Activated T-helper 1 cell treated with anti-CD3 and anti-CD28 coated beads, Interleukin-12 subunit alpha, Interleukin-12 subunit beta, Interleukin-2, Interleukin-4 antibody, amounts not matched to agents 30 ng/mL and 10 ng/mL and 1 ng/mL, durations not matched to agents 14 hours and 24 hours and 36 hours (primary cell): ENCODE measurements at regions of chr11 and their contacts with region 1.

Region 1: DNA sequence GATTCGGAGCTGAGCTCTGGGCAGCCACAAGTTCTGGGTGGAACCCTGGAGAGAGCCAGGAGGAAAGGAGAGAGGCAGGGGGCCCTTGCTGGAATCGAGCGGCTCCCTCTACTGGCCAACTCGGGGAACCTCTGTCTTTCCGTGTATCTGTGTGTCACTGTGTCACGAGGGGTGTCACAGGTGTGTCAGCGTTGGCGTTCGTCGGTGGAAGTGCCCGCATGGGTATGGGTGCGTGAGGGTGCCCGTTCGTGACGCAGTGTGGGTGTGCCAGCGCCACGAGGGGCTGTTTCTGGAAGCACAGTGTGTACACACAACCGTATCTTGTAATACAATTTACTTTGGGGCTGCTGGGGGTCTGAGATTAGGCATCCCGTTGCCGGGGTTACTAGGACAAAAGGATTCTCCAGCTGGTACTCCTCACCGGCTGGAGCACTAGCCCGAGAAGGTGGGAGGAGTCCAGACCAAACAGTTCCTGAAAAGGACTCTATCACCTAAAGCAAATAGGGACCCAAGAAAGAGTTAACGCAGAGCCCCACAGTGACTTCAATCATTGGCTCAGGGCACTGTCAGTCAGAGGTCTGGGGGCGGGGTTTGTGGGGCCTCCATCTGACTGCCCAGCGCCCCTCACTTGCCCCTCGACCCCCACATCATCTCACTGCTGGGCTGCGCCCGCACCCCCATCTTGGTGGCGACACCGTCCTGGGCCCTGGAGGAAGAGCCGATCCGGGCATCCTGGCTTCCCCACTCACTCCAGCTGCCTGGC is 2.6 kb upstream of the BCL9L start:
- DNase-seq: peak; percentile 85
- H3K4me3 Mint-ChIP-seq: peak overlapping the region; percentile 93
- H3K27ac Mint-ChIP-seq: peak overlapping the region; percentile 95
- H3K4me1 Mint-ChIP-seq: peaks cover 53% of the 10 kb centered on the region
- H3K27me3 Mint-ChIP-seq: peaks cover 3% of the 10 kb centered on the region

Region 2: GRCh38 chr11:118002541-118003423 is 925.5 kb before region 1 on chr11:
- intact Hi-C with region 1: loop called (anchors 5 kb)
- DNase-seq: peak; percentile 50
- H3K4me3 Mint-ChIP-seq: peak overlapping the region; percentile 61
- H3K27ac Mint-ChIP-seq: peak overlapping the region; percentile 98
- H3K4me1 Mint-ChIP-seq: peaks cover 92% of the 10 kb centered on the region
- H3K27me3 Mint-ChIP-seq: no peaks in the 10 kb centered on the region

Region 3: DNA sequence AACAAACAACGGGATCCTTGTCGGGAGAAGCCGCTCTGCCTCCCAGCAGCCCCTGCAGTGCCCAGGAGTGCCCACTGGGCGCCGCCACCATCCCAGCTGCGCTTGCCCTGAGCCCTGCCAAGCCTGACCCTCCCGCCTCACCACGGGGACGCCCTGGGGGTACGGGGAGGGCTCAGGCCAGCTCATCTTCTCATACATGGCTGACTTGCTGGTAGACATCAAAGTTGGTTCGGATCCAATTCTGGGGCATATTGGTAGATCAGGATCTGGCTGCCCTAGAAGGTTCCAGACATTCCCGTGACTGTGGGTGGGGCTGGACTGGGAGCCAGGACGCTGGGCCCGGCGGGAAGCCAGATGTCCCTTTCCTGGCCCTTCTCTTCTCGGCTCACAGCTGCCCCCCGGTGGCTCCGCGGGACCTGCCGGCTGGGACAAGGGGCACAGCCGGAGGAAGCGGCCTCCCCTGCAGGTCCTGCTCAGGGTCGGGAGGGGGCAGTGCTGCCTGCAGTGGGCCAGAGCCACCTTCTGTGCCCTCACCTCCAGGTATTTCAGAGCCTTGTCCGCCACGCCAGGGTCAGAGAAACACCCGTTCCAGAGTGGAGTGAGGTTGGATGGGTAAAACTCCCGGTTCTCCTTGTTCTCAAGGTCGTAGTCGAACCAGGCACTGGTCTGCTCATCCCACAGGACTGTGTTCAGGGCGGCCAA is 238.3 kb before region 1 on chr11:
- intact Hi-C with region 1: loop called (anchors 1 kb)
- DNase-seq: peak; percentile 72
- H3K4me3 Mint-ChIP-seq: peak overlapping the region; percentile 60
- H3K27ac Mint-ChIP-seq: peak overlapping the region; percentile 52
- H3K4me1 Mint-ChIP-seq: peaks cover 36% of the 10 kb centered on the region
- H3K27me3 Mint-ChIP-seq: peaks cover 10% of the 10 kb centered on the region

Region 4: DNA sequence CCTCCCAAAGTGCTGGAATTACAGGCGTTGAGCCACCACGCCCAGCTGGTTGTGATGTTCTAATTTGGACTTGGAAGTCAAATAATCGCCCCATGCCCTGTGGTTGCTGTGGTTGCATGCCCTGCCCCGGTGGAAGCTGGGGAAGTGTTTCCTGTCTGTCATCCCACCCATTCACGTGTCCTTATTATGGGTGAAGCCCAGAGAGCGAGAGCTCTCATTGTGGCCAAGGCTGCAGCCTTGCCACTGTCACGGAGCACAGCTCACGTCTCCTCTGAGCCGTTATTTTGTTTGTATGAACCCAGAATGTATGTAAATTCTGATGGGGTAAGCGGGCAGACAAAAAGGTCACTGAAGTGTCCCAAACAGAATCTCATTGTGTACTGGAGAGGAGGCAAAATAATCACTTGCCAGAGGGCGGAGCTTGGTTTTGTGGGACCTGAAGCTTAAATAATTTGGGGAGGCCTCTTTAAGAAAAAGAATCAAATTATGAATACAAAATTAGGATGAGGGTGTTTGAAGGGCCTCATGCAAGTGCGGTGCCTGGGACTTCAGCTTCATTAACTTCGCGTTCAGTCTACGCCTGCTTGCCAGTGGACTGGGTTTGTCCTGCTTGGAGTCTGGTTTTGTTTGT is 223.1 kb before region 1 on chr11:
- intact Hi-C with region 1: no loop called
- DNase-seq: no peak
- H3K4me3 Mint-ChIP-seq: no peak overlapping the region
- H3K27ac Mint-ChIP-seq: no peak overlapping the region
- H3K4me1 Mint-ChIP-seq: peaks cover 5% of the 10 kb centered on the region
- H3K27me3 Mint-ChIP-seq: peaks cover 15% of the 10 kb centered on the region

Region 5: GRCh38 chr11:118914178-118914918 is 13.9 kb before region 1 on chr11:
- intact Hi-C with region 1: loop called (anchors 1 kb)
- DNase-seq: peak; percentile 59
- H3K4me3 Mint-ChIP-seq: peak overlapping the region; percentile 71
- H3K27ac Mint-ChIP-seq: peak overlapping the region; percentile 99
- H3K4me1 Mint-ChIP-seq: peaks cover 83% of the 10 kb centered on the region
- H3K27me3 Mint-ChIP-seq: no peaks in the 10 kb centered on the region

Region 6: DNA sequence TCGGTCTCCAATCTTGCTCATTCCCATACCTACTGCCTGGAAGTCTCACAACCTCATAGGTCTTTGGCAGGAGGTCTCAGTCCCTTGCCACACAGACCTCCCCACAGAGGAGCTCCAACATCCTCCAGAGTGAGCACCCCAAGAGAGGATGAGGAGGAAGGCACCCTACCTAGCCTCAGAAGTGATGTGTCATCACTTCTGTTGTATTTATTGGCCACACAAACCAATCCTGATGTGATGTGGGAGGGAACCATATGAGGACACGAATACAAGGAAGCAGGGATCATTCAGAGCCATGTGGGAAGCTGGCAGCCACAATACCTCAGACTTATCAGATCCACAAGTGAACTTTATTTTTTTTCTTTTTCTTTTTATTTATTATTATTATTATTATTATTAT is 18.8 kb after region 1 on chr11:
- intact Hi-C with region 1: no loop called
- DNase-seq: no peak
- H3K4me3 Mint-ChIP-seq: no peak overlapping the region
- H3K27ac Mint-ChIP-seq: no peak overlapping the region
- H3K4me1 Mint-ChIP-seq: peaks cover 5% of the 10 kb centered on the region
- H3K27me3 Mint-ChIP-seq: peaks cover 12% of the 10 kb centered on the region

Region 7: DNA sequence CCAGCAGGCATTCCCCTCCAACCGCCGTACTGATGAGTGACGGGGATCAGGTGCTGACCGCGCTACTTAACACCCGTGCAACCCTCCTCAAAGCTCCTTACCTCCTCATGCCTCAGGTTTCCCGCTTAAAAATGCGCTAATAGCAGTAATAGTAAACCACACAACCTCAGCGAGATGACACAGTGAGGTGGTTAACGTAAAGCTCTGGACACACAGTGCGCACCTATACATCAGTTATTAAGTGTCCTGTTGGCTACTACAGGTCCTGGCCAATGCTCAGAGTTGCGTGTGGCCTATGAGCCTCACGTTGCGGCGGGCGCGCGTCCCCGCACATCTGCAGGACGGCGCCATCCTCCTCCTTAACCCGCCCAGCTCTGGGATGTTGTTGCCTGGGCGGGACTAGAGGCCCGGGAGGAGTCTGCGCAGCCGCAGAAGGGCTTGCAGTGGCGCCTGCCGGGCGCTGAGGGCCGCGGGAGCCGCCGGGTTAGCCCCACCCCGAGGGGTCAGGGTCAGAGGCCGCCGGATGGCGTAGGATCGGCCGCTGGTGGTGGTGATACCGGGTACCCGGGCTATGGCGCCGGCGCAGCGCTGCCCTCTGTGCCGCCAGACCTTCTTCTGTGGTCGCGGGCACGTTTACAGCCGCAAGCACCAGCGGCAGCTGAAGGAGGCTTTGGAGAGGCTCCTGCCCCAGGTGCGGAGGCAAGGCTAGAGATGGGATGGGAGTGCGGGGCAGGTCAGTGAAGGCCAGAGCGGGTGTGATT is 69.5 kb after region 1 on chr11 and contains the start of gene CENATAC:
- intact Hi-C with region 1: loop called (anchors 2 kb)
- DNase-seq: peak; percentile 96
- H3K4me3 Mint-ChIP-seq: peak within 1 kb of the TSS; percentile 96
- H3K27ac Mint-ChIP-seq: peak within 1 kb of the TSS; percentile 97
- H3K4me1 Mint-ChIP-seq: peaks cover 27% of the 10 kb centered on the region
- H3K27me3 Mint-ChIP-seq: no peaks in the 10 kb centered on the region
- total RNA-seq, gene CENATAC: 50.1 and 53.6 TPM in 2 replicates

Region 8: DNA sequence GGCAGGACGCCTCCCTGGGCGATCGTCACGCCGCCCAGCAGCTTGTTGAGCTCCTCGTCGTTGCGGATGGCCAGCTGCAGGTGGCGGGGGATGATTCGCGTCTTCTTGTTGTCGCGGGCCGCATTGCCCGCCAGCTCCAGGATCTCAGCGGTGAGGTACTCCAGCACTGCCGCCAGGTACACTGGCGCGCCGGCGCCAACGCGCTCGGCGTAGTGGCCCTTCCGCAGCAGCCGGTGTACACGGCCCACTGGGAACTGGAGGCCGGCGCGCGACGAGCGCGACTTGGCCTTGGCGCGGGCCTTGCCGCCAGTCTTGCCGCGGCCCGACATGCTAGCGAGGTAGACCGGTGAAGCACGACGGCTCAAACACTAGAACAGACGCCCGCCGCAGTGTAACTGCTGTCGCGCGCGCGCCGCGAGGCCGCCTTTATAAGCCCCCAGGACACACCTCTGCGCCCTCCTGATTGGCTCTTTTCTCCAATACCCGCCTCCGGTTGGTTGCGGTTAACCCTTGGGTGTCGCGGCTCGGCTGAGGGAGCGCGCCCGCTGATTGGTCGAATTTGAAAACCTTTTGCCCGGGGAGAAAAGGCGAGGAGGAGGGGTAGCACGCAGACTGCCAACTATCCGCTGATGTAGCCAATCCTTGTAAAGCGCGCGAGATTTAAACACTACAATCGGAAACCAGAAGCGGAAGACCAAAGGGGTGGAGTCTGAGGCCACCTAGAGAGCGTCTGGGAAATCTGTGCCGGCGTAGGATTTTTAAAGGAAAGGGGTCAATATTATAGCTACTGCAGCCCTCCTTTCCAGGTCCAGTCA is 167.0 kb after region 1 on chr11:
- intact Hi-C with region 1: loop called (anchors 2 kb)
- DNase-seq: peak; percentile 100
- H3K4me3 Mint-ChIP-seq: peak overlapping the region; percentile 95
- H3K27ac Mint-ChIP-seq: peak overlapping the region; percentile 91
- H3K4me1 Mint-ChIP-seq: peaks cover 59% of the 10 kb centered on the region
- H3K27me3 Mint-ChIP-seq: peaks cover 4% of the 10 kb centered on the region